ENCODE measurements at regions of chr6 and their contacts with region 1.

Region 1: DNA sequence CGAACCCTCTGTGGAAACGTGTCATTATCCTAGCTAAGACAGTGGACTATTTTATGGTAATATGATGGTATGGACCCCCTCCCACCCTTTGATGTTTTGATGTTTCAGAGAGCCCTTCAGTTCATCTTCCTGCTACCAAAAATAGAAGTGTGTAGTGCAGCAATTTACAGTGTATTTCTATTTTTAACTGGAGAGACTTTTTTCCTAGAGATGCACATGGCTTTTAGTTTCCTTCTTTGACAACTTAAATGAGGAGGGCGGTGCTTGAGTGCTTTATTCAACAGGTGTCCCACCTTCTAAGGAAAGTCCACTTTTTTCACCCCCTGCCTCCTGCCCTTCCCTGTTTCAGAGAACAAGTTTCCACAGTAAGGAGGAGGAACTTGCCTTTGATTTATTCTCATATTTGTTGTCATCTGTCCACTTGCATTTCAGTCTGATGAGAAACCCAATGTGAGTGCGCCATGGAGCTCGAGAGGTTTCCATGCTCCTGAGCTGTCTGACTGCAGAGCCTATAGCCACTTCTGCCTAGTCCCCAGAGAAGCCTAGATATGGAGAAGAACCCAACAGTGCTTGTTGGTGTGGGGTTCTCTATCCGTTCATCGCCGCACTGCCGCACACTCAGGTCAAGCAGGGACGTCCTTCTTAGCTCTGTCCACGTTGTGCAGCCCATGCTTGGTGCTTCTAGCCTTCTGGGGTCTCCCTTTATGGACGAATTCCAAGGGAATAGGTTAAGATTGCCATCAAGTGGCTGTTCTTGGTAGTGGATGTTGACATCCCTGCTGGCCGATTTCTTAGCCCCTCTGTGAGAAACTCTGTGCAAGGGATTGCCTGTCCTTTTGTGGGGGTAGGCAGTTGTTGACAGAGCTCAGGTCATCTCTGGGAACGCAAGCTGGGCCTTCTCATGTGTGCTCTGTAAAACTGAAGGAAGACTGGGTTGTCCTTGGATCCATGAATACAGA is 144.2 kb downstream of the JARID2 start:
- DNase-seq: peak; percentile 60
- ATAC-seq: peak; percentile 89
- H3K4me3 ChIP-seq: no peak overlapping the region
- H3K27ac ChIP-seq: no peak overlapping the region
- H3K4me1 ChIP-seq: no peaks in the 10 kb centered on the region
- H3K27me3 ChIP-seq: no peaks in the 10 kb centered on the region
- CTCF ChIP-seq: peak; percentile 93
- EP300 ChIP-seq: no peak
- POLR2A ChIP-seq: no peak
- RAD21 ChIP-seq: peak; percentile 89

Region 2: GRCh38 chr6:15441215-15441868 is 51.3 kb after region 1 on chr6:
- CTCF ChIA-PET with region 1: interaction called, 6 read pairs
- POLR2A ChIA-PET with region 1: no interaction called
- in situ Hi-C with region 1: no loop called
- intact Hi-C with region 1: loop called (anchors 5 kb)
- DNase-seq: peak; percentile 65
- ATAC-seq: peak; percentile 82
- H3K4me3 ChIP-seq: no peak overlapping the region
- H3K27ac ChIP-seq: no peak overlapping the region
- H3K4me1 ChIP-seq: peaks cover 15% of the 10 kb centered on the region
- H3K27me3 ChIP-seq: no peaks in the 10 kb centered on the region
- CTCF ChIP-seq: peak; percentile 81
- EP300 ChIP-seq: no peak
- POLR2A ChIP-seq: no peak
- RAD21 ChIP-seq: peak; percentile 69

Measured in HepG2 (cell line).